ENCODE measurements at regions of chr1 and their contacts with region 1.

Region 1: DNA sequence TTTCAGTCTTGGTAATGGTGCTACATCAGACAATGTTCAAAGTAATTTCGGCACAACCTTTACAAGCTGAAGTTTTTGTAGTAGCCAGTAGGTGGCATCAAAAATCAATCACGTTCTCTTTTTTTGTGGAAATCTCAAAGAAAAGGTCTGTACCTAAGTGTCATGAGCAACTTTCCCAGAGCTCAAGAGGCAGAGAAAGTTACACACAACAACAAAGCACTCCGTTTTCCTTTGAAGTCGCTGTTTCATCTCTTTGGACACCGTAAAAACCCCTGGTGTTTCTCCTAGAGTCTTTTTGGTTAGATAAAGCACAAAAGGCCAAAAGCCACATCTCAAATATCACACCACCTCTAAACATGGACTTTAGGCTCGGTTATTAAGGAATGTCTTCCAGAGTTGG is 131.6 kb downstream of the LHX8 start:
- DNase-seq: no peak
- H3K4me3 ChIP-seq: no peak overlapping the region
- H3K27ac ChIP-seq: no peak overlapping the region
- H3K4me1 ChIP-seq: no peaks in the 10 kb centered on the region
- H3K27me3 ChIP-seq: no peaks in the 10 kb centered on the region
- CTCF ChIP-seq: peak in 1 of 3 donors; percentile 29
- EP300 ChIP-seq: no peak
- POLR2A ChIP-seq: no peak

Region 2: DNA sequence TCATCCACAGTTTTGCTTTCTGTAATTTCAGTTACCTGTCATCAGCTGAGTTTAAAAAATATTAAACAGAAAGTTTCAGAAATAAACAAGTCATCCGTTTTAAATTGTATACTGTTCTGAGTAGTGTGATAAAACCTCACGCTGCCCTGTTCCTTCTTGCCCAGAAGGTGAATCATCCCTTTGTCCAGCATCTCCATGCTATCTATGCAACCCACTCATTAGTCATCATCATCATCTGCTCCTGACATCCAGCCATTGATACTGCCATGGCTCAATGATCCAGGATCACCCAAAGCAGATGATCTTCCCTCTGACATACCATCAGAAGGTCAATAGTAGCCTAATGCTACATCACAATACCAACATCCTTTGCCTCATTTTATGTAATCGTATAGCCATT is 146.8 kb after region 1 on chr1:
- intact Hi-C with region 1: no loop called
- DNase-seq: no peak
- H3K4me3 ChIP-seq: no peak overlapping the region
- H3K27ac ChIP-seq: no peak overlapping the region
- H3K4me1 ChIP-seq: no peaks in the 10 kb centered on the region
- H3K27me3 ChIP-seq: no peaks in the 10 kb centered on the region
- CTCF ChIP-seq: no peak
- EP300 ChIP-seq: no peak
- POLR2A ChIP-seq: no peak

Region 3: GRCh38 chr1:75632350-75632949 is 366.7 kb after region 1 on chr1:
- intact Hi-C with region 1: loop called in 1 of 4 experiments (anchors 10 kb)
- DNase-seq: no peak
- H3K4me3 ChIP-seq: no peak overlapping the region
- H3K27ac ChIP-seq: no peak overlapping the region
- H3K4me1 ChIP-seq: no peaks in the 10 kb centered on the region
- H3K27me3 ChIP-seq: no peaks in the 10 kb centered on the region
- CTCF ChIP-seq: peak; percentile 13 to 44 (median 26)
- EP300 ChIP-seq: no peak
- POLR2A ChIP-seq: no peak